Stomach (tissue), 19 donors: ENCODE measurements at regions of chr1 and their contacts with region 1.

Region 1: GRCh38 chr1:15501208-15502032 is 22.6 kb downstream of the CASP9 start:
- DNase-seq: peak; percentile 79 to 84
- H3K4me3 ChIP-seq: no peak overlapping the region
- H3K27ac ChIP-seq: no peak overlapping the region
- H3K4me1 ChIP-seq: peaks cover 0 to 6% (median 0%) of the 10 kb centered on the region in 4 donors
- H3K27me3 ChIP-seq: no peaks in the 10 kb centered on the region
- CTCF ChIP-seq: peak in 5 of 7 experiments; percentile 53 to 65 (median 58)
- EP300 ChIP-seq: no peak
- POLR2A ChIP-seq: no peak

Region 2: GRCh38 chr1:15304701-15305467 is 196.5 kb before region 1 on chr1:
- intact Hi-C with region 1: no loop called
- DNase-seq: peak; percentile 76 to 85
- H3K4me3 ChIP-seq: no peak overlapping the region
- H3K27ac ChIP-seq: no peak overlapping the region
- H3K4me1 ChIP-seq: peaks cover 0 to 14% (median 7%) of the 10 kb centered on the region in 4 donors
- H3K27me3 ChIP-seq: no peaks in the 10 kb centered on the region
- CTCF ChIP-seq: peak in 6 of 7 experiments; percentile 9 to 97 (median 84)
- EP300 ChIP-seq: no peak
- POLR2A ChIP-seq: no peak

Region 3: DNA sequence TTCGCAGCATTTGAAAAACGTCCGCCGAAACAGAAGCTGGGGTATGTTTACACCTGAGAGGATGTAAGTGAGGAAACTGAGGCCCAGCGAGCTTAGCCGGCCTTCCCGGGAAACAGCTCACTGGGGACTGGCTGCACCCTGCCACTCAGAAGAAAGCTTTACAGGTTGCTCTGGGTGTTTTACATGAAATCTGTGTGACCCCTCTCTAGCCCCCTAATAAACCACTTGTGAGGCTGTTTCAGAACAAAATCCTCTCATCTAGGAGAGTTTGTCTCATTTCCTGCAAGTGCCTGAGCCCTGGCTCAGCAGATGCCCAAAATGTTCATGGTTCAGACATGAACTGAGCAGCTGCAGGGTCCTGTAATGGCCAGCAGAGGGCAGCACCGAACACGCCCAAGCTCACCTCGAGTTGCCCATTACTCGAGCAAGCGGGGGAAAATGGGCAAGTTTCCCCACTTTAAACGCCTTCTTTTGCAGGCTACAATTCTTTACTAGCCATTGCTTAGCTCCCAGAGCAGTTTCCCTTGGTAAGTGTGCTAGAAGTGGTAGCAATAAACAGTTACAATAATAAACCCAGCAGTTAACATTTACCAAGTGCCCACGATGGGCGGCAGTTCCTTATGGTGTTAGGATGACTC is 177.9 kb before region 1 on chr1:
- intact Hi-C with region 1: loop called (anchors 10 kb)
- DNase-seq: peak; percentile 87 to 94
- H3K4me3 ChIP-seq: no peak overlapping the region
- H3K27ac ChIP-seq: peak overlapping the region in 4 of 5 donors; percentile 51 to 78 (median 68)
- H3K4me1 ChIP-seq: peaks cover 21 to 43% (median 33%) of the 10 kb centered on the region in 4 donors
- H3K27me3 ChIP-seq: no peaks in the 10 kb centered on the region
- CTCF ChIP-seq: peak in 6 of 7 experiments; percentile 89 to 100 (median 99)
- EP300 ChIP-seq: no peak
- POLR2A ChIP-seq: no peak

Region 4: DNA sequence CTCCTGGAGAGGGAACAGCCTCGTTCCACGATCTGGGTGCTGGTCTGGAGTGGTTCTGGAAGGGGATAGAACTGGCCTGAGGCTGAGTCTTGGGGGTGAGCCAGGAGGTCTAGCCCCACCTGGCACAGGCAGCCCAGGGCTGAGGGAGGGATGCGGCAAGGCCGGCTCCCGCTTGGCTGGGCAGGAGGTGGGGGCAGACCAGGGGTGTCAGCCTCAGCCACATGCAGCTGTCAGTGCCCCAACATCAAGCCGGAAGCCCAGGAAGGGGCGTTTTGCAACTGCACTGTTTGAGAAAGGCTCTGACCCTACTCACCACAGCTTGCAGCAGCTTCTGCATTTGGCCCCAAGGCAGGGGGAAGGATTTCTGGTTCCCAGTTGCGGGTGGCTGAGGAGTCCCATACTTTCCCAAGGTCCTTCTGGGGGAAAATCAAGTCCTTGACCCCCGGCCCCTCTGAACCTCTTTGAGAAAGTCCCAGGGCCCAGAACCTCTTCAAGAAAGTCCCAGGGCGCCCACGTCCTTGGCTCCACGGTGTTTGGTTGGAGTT is 89.8 kb before region 1 on chr1:
- intact Hi-C with region 1: no loop called
- DNase-seq: peak; percentile 65 to 70
- H3K4me3 ChIP-seq: peak overlapping the region; percentile 65 to 88 (median 85)
- H3K27ac ChIP-seq: peak overlapping the region; percentile 83 to 95 (median 93)
- H3K4me1 ChIP-seq: peaks cover 61 to 81% (median 72%) of the 10 kb centered on the region in 4 donors
- H3K27me3 ChIP-seq: no peaks in the 10 kb centered on the region
- CTCF ChIP-seq: no peak
- EP300 ChIP-seq: no peak
- POLR2A ChIP-seq: no peak